ENCODE measurements at regions of chr12 and their contacts with region 1.

Region 1: GRCh38 chr12:10331642-10332239 is 24.1 kb downstream of the KLRD1 start:
- DNase-seq: no peak
- H3K4me3 ChIP-seq: no peak overlapping the region
- H3K27ac ChIP-seq: no peak overlapping the region
- H3K4me1 ChIP-seq: no peaks in the 10 kb centered on the region
- H3K27me3 ChIP-seq: no peaks in the 10 kb centered on the region
- CTCF ChIP-seq: peak in 2 of 3 experiments; percentile 76 to 90; a peak in 3 of 4 replicates
- EP300 ChIP-seq: no peak
- POLR2A ChIP-seq: no peak
- RAD21 ChIP-seq: peak; percentile 90 to 91

Region 2: GRCh38 chr12:10285919-10286318 is 45.8 kb before region 1 on chr12:
- CTCF ChIA-PET with region 1: no interaction called
- POLR2A ChIA-PET with region 1: no interaction called
- DNase-seq: no peak
- H3K4me3 ChIP-seq: no peak overlapping the region
- H3K27ac ChIP-seq: no peak overlapping the region
- H3K4me1 ChIP-seq: no peaks in the 10 kb centered on the region
- H3K27me3 ChIP-seq: no peaks in the 10 kb centered on the region
- CTCF ChIP-seq: no peak
- EP300 ChIP-seq: no peak
- POLR2A ChIP-seq: no peak
- RAD21 ChIP-seq: no peak

Region 3: DNA sequence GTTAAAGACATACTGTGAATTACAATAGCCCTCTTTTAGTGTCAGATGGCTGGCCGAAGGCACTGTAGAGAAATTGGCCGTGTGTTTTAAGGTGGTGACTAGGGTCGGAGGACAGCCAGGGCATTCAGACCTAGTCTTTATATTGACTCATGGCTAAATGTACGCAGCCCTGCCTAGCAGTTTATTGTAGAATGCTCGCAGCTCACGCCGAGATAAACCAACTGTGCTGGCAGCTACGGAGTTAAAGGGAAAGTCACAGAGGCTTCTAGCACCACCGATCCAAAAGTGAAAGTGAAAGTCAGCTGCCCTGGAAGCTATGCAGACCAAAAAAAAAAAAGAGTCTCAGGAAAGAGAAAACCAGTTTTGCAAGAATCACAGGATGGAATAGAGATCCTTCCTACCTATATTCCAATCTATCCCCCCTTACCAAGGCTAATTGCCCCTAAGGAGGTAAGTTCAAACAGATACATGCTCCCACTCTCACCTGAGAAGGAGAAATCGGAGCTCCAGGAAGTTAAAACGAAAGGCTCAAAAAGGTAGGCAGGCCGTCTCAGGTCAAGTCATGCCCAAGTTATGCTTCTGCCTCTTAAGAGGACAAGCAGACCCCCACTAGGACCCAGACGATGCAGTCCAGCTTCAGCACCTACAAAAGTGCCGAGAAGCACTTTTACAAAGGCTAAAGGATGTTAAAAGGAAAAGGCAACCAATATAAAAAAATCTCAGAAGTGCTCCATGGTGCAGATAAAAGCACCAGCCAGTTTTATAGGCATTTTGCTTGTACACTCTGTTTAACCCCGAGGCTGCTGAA is 33.3 kb after region 1 on chr12:
- CTCF ChIA-PET with region 1: interaction called, 24 read pairs
- POLR2A ChIA-PET with region 1: no interaction called
- DNase-seq: no peak
- H3K4me3 ChIP-seq: peak overlapping the region; percentile 34 to 63 (median 50)
- H3K27ac ChIP-seq: peak overlapping the region; percentile 16
- H3K4me1 ChIP-seq: peaks cover 14 to 33% (median 21%) of the 10 kb centered on the region in 4 experiments; a peak in 6 of 7 replicates
- H3K27me3 ChIP-seq: no peaks in the 10 kb centered on the region
- CTCF ChIP-seq: no peak
- EP300 ChIP-seq: no peak
- POLR2A ChIP-seq: no peak
- RAD21 ChIP-seq: no peak